ENCODE measurements at regions of chr5 and their contacts with region 1.

Region 1: DNA sequence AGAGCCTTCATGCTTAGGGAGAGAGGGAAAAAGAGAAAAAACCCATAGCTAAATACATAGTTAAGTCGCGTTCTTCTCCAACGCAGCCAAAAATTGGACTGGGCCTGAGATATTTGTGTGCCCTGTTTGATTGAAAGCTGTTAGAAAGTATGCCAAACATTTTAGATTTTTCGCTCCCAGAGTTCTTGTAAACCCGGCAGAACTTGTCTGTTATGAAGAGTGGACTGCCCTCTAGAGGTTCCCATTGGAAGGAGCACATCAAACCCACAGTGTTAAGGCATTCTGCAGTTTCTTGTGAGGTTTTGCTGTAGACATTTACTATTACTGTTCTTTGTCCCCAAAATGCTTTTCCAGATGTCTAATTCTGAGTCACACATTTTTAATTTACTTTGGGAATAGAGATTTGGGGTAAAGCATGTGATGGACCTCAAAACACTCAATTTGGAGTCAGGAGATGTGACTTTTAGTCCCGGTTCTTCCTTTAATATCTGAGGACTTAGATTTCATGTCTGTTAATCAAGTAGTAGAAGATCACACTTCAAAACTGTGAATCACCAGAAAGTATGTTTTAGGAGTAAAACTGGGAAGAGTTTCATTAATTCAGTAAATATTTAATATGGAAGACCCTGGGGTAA is 96.6 kb downstream of the PCSK1 start:
- H3K4me3 ChIP-seq: no peak overlapping the region
- H3K27ac ChIP-seq: no peak overlapping the region
- H3K4me1 ChIP-seq: peaks cover 9% of the 10 kb centered on the region
- CTCF ChIP-seq: peak; percentile 66

Region 2: GRCh38 chr5:95858661-95859326 is 477.7 kb before region 1 on chr5:
- CTCF ChIA-PET with region 1: interaction called, 69 read pairs
- POLR2A ChIA-PET with region 1: no interaction called
- H3K4me3 ChIP-seq: no peak overlapping the region
- H3K27ac ChIP-seq: 0 out of 2 replicates have a peak overlapping the region, but pooled peaks have one; percentile 18
- H3K4me1 ChIP-seq: peaks cover 23% of the 10 kb centered on the region
- CTCF ChIP-seq: peak; percentile 98

Region 3: DNA sequence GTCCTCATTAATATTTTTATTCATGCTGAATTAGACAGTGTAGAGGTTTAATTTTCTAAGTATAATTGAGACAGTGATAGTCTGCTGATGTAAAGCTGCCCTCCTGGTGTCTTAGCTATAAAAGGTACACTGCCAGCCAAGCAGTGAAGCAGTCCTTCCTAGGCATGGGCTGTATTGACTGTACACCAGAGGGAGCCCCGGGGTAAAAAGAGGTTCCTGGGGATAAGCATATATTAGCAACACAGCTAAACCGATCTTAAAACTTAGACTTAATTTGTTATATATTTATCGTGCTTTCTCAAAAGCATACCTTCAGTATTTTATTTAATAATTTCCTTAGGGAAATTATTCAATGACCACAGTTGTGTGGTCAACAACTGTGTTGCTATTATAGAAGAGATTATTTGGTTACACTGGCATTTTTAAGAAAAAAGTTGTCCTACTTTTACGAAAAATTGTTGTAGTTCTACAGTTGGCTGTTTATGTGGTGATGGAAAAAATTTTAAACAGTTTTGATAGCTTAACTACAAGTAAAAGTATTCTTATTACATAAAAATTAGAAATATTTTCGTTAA is 443.6 kb before region 1 on chr5:
- CTCF ChIA-PET with region 1: interaction called, 22 read pairs
- POLR2A ChIA-PET with region 1: no interaction called
- H3K4me3 ChIP-seq: no peak overlapping the region
- H3K27ac ChIP-seq: no peak overlapping the region
- H3K4me1 ChIP-seq: no peaks in the 10 kb centered on the region
- CTCF ChIP-seq: peak; percentile 31; the same call in 1 of the 2 replicates

Region 4: DNA sequence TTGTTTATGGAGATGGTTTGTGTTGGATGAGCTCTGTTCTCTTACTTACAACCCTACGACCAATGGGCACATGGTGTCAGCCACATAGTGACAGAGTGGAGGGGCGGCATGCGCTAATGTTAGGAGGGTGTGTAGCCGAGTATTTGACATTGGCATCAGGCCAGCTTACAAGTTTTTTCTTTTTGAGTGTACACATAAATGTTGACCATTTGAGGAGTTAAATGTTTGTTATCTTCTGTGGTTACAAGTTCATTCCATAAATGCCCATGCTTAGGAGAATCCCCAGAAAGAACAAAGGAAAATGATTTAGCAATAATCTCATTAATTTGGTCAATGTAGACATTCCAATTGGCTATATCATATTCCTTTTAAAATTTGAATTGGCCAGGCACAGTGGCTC is 194.7 kb before region 1 on chr5:
- CTCF ChIA-PET with region 1: interaction called, 10 read pairs
- POLR2A ChIA-PET with region 1: no interaction called
- H3K4me3 ChIP-seq: no peak overlapping the region
- H3K27ac ChIP-seq: no peak overlapping the region
- H3K4me1 ChIP-seq: peaks cover 5% of the 10 kb centered on the region; the same call in 1 of the 2 replicates
- CTCF ChIP-seq: no peak

Region 5: DNA sequence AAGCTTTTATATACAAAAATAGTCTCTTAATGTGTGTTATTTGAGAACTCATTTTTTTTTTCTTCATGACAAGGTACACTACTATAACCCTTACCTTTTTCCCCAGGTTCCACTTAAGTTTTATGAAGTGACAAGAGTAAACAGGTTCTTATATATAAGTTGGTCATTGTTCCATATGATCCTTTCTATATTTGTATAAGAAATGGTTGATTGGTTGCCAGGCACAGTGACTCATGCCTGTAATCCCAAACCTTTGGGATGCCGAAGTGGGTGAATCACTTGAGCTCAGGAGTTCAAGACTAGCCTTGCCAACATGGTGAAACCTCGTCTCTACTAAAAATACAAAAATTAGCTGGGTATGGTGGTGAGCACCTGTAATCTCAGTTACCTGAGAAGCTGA is 11.8 kb before region 1 on chr5:
- CTCF ChIA-PET with region 1: interaction called, 21 read pairs
- POLR2A ChIA-PET with region 1: no interaction called
- H3K4me3 ChIP-seq: no peak overlapping the region
- H3K27ac ChIP-seq: no peak overlapping the region
- H3K4me1 ChIP-seq: no peaks in the 10 kb centered on the region
- CTCF ChIP-seq: no peak

Measured in HEK293 (cell line).